Activated CD4-positive, alpha-beta memory T cell treated with anti-CD3 and anti-CD28 coated beads for 36 hours (primary cell): ENCODE measurements at regions of chr4 and their contacts with region 1.

Region 1: GRCh38 chr4:57163530-57164459 is 53.6 kb upstream of the IGFBP7 start:
- DNase-seq: peak; percentile 79
- H3K4me3 Mint-ChIP-seq: peak overlapping the region; percentile 74
- H3K27ac Mint-ChIP-seq: no peak overlapping the region
- H3K4me1 Mint-ChIP-seq: peaks cover 9% of the 10 kb centered on the region
- H3K27me3 Mint-ChIP-seq: peaks cover 14% of the 10 kb centered on the region

Region 2: GRCh38 chr4:57136281-57136680 is 27.5 kb before region 1 on chr4:
- CTCF ChIA-PET with region 1: interaction called, 10 read pairs
- POLR2A ChIA-PET with region 1: no interaction called
- intact Hi-C with region 1: no loop called
- DNase-seq: no peak
- H3K4me3 Mint-ChIP-seq: no peak overlapping the region
- H3K27ac Mint-ChIP-seq: no peak overlapping the region
- H3K4me1 Mint-ChIP-seq: no peaks in the 10 kb centered on the region
- H3K27me3 Mint-ChIP-seq: peaks cover 9% of the 10 kb centered on the region

Region 3: DNA sequence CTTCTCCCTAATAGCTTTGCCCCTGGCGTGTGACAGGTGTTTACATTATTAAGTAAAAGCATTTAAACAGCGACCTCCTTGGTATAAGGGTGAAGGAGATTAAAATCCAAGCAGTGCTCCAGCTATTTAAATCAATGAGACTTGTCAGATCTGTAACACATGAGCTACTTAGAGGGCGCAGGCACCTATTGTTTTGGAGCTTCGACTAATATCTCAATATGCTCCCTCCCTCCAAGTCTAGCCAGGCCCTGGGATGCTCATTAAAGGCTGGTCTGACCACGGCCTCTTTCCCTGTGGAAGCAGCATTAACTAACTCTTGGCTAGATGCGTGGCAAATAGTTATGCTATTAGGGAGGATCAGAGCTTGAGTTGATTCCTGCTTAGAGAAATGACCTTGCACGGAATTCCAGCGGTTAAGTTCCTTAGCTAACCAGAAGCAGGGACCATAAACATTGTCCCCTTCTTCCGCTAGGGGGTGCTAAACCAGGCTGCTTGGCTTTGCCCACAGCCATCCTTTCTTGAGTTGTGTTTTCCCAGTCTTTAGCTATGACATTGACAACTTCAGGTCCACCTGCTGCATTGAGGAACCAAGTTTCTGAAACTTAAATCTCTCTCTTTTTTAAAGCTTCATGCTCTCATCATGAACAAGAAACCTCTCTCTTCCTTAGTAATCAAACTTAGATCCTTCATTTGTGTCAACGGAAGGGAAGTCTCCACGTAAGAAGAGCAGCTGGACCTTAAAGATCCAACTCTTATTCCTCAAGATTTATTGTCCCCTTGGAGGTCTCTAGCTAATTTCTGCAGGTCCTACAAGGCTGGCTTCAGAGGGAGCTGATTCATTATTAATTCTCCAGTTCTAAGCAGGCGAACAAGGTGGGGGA is 27.0 kb after region 1 on chr4:
- CTCF ChIA-PET with region 1: interaction called, 24 read pairs
- POLR2A ChIA-PET with region 1: no interaction called
- intact Hi-C with region 1: no loop called
- DNase-seq: peak; percentile 36
- H3K4me3 Mint-ChIP-seq: no peak overlapping the region
- H3K27ac Mint-ChIP-seq: no peak overlapping the region
- H3K4me1 Mint-ChIP-seq: no peaks in the 10 kb centered on the region
- H3K27me3 Mint-ChIP-seq: peaks cover 6% of the 10 kb centered on the region

Region 4: DNA sequence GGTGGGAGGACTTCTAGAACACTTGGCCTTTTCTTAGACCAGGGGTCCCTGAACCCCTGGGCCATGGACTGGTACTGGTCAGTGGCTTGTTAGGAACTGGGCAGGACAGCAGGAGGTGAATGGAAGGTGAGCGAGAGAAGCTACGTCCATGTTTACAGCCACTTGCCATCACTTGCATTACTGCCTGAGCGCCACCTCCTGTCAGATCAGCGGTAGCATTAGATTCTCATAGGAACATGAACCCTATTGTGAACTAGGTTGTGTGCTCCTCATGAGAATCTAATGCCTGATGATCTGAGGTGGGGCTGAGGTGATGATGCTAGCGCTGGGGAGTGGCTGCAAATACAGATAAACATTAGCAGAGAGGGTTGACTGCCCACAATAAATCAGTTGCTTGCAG is 47.3 kb after region 1 on chr4:
- CTCF ChIA-PET with region 1: interaction called, 9 read pairs
- POLR2A ChIA-PET with region 1: no interaction called
- intact Hi-C with region 1: loop called (anchors 1 kb)
- DNase-seq: no peak
- H3K4me3 Mint-ChIP-seq: no peak overlapping the region
- H3K27ac Mint-ChIP-seq: no peak overlapping the region
- H3K4me1 Mint-ChIP-seq: no peaks in the 10 kb centered on the region
- H3K27me3 Mint-ChIP-seq: no peaks in the 10 kb centered on the region

Region 5: DNA sequence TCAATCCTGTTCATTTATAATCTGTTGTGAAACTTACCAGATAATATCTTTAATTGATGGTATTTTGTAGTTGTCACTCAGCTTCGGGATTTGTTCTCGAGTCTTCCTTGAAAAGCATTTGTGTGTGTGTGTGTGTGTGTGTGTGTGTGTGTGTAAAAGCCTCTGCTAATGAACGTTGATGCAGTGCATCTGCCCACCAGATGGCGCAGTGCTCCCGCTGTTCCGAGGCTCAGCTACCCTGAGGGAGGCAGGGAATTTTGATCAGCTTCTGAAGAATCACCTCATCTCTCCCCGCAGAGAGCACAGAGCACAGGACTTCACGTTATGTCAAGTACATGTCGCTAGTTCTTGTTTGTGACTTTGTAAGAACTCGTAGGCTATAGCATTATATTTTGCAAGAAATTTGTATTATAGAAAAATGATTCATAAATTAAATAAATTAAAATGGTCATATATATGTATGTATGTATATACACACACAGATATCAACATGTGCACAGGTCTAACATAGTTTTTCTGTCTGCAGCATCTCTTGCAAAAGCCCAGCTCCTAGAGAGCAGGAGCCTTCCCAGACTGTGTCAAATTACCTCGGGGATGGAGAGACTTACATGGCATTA is 263.1 kb after region 1 on chr4:
- CTCF ChIA-PET with region 1: interaction called, 15 read pairs
- POLR2A ChIA-PET with region 1: no interaction called
- intact Hi-C with region 1: no loop called
- DNase-seq: peak; percentile 47
- H3K4me3 Mint-ChIP-seq: no peak overlapping the region
- H3K27ac Mint-ChIP-seq: no peak overlapping the region
- H3K4me1 Mint-ChIP-seq: no peaks in the 10 kb centered on the region
- H3K27me3 Mint-ChIP-seq: no peaks in the 10 kb centered on the region